A549 (cell line): ENCODE measurements at regions of chr10 and their contacts with region 1.

Region 1: DNA sequence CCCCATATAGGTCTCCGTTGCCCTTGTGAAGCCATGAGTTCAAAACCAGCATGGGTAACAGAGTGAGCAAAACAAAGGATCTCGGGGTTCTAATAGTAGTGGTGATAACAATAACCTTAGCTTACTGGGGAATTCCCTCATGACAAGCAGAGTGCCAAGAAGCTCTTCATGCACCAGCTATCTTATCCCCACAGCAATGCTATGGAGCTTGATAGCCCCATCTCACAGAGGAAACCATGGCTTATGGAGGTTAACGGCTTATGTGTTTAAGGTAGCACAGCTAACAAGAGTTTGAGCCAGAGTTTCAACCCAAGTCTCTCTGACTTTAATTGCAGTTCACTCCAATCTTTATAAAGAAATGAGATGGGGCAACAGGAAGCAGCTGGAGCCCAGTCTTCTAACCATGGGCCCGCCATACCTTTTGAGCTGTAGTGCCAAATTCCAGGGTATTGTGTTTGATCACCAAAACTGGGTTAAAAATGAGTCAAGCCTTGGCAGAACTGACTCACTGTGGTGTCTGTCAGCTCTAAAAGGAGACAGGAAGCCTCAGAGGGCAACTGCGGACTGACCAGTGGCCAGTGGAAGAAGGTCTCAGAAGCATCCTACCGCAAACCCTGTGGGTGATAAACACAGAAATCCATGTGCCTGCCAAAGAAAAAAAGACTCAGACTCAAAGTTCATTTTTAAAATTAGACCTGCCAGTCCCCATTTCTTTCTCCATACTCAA is 16.5 kb upstream of the PLAU start:
- DNase-seq: peak in 1 of 2 experiments; percentile 58
- ATAC-seq: peak; percentile 49 to 67; a peak in 3 of 6 replicates
- H3K4me3 ChIP-seq: no peak overlapping the region
- H3K27ac ChIP-seq: peak overlapping the region; percentile 97 to 98
- H3K4me1 ChIP-seq: peaks cover 59% of the 10 kb centered on the region
- CTCF ChIP-seq: no peak
- EP300 ChIP-seq: 0 out of 5 replicates have a peak, but pooled peaks of 1 of the 2 experiments have one; percentile 16
- POLR2A ChIP-seq: no peak
- RAD21 ChIP-seq: no peak

Region 2: GRCh38 chr10:73559590-73559989 is 334.8 kb before region 1 on chr10:
- CTCF ChIA-PET with region 1: no interaction called
- POLR2A ChIA-PET with region 1: no interaction called
- DNase-seq: peak in 1 of 2 experiments; percentile 38
- ATAC-seq: no peak; a peak in 1 of 6 replicates
- H3K4me3 ChIP-seq: no peak overlapping the region
- H3K27ac ChIP-seq: no peak overlapping the region
- H3K4me1 ChIP-seq: no peaks in the 10 kb centered on the region
- CTCF ChIP-seq: no peak
- EP300 ChIP-seq: no peak
- POLR2A ChIP-seq: no peak
- RAD21 ChIP-seq: no peak

Region 3: DNA sequence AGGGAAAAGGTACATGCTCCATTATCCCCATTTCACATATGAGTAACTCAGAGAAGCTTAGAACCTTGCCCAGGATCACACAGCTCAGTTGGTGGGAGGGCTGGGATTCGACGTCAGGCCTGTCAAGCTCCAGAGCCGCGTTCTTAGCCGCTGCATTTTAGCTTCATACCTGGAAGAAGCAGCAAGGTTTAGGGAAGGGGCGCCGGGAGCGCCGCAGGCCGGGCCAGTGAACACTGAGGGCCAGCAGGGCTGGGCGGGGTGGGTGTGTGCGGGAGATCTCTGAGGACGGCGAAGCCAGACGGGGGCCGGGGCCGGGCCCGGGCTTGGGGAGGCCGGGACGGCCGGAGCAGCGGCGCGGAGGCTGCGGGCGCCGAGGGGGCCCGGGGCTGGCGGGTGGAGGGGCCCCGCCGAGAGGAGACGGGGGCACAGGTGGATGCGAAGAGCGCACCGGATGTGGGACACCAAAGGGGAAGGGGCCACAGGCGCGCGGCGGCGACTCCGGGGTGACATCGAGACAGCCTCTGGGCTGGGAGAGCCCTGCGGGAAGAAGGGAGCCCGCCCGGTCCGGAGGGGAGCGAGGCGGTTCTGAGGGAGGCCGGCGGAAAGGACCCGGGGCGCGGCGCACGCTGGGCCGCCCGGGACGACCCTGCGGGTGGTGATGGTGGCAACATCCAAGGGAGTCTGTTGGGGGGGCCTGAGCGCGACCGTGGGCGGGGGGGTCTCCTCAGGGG is 83.5 kb before region 1 on chr10:
- CTCF ChIA-PET with region 1: no interaction called
- POLR2A ChIA-PET with region 1: no interaction called
- DNase-seq: peak; percentile 29 to 58
- ATAC-seq: peak; percentile 54 to 55
- H3K4me3 ChIP-seq: peak overlapping the region; percentile 90
- H3K27ac ChIP-seq: peak overlapping the region; percentile 92 to 95
- H3K4me1 ChIP-seq: peaks cover 14% of the 10 kb centered on the region; the same call in 2 of the 3 replicates
- CTCF ChIP-seq: no peak
- EP300 ChIP-seq: no peak
- POLR2A ChIP-seq: no peak
- RAD21 ChIP-seq: no peak

Region 4: DNA sequence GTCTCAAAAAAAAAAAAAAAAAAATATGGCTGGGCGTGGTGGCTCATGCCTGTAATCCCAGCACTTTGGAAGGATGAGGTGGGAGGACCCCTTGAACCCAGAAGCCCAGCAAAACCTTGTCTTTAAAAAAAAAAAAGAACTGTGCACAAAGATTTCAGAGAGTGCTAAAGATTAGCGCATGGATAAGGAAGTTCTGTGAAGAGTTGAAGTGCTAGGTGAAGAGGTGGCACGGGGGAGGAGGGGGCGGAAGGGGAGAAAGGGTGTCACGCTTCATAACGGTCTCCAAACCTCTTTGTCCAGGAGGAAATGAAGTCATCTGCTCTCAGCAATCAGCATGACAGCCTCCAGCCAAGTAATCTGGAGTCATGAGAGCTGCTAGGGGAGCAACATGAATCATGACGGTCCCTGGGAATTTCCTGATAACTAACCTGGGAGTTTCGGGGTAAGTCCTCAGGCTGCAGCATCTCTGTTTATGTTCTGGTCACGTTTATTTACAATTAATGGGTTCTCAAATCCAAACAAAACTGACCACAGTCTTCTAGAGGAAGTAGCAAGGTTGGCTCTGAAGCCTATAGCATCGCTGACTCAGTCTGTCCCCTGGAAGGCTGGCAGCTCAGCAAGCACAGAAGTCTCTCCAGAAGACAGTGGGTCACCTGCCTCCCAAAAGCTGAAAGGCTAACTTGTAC is 14.6 kb after region 1 on chr10:
- CTCF ChIA-PET with region 1: interaction called, 162 read pairs
- POLR2A ChIA-PET with region 1: interaction called, 98 read pairs
- DNase-seq: peak; percentile 81 to 93
- ATAC-seq: peak; percentile 51; a peak in 5 of 6 replicates
- H3K4me3 ChIP-seq: peak overlapping the region; percentile 60; the same call in 2 of the 3 replicates
- H3K27ac ChIP-seq: peak overlapping the region; percentile 91 to 96
- H3K4me1 ChIP-seq: peaks cover 79% of the 10 kb centered on the region
- CTCF ChIP-seq: no peak
- EP300 ChIP-seq: peak; percentile 55 to 74; a peak in 3 of 5 replicates
- POLR2A ChIP-seq: no peak
- RAD21 ChIP-seq: peak in 1 of 2 experiments; percentile 13; a peak in 1 of 5 replicates